IMR-90 (cell line): ENCODE measurements at regions of chr7 and their contacts with region 1.

Region 1: DNA sequence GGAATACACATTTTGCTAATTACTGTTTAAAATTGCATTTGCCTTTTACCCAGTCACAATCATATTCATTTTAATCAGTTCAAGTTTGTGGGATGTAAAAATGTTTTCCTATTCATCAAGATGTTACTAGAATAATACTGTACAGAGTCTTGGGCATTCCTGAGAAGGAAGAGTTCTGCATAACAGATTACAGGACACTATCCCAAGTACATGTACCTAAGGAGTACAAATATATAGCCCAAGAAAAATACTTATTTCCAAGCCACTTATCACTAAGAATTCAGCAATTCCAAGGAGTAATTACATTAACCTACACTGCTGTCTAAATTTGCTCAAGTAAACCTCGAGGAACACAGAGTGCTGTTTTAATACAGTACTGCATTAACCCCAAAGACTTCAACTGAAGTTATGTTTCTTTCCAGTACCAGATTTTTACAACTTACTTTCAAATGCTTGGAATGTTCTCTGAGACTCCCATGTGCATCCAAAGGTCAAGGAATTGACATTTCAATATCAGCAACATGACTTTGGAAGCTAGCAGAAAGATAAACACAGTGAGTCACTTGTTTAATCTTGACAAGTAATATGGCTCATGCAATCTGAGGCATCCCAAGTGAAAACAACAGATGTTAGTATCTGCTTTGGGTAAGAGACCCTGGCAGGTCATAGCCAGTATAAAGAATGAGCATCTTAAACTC is 125.4 kb upstream of the BET1 start:
- DNase-seq: peak; percentile 98
- ATAC-seq: peak; percentile 92
- H3K4me3 ChIP-seq: no peak overlapping the region
- H3K27ac ChIP-seq: peak overlapping the region; percentile 68; the same call in 1 of the 2 replicates
- H3K4me1 ChIP-seq: peaks cover 14% of the 10 kb centered on the region
- H3K27me3 ChIP-seq: no peaks in the 10 kb centered on the region
- CTCF ChIP-seq: no peak
- POLR2A ChIP-seq: no peak
- RAD21 ChIP-seq: no peak; the same call in 1 of the 2 replicates

Region 2: DNA sequence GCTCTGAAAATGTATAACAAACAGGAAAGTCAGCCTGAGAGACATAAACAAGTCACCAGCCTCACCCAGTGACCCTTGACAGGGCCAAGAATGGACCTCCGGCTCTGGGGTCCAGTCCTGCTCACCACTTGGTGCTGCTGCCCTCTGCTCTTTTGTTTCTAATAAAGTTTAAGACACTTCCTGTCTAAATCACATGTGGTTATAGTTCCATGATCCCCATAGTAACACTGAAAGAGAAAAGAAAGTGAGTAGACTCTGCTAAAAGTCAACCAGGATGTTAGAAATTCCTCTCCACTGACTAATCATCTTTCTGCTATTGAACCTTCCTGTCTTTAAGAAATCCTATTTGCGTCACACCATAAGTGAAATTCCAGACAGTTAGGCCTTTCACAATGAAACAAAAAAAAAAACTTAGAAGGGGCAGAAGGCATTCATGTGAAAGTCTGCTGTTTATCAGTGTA is 53.7 kb after region 1 on chr7:
- CTCF ChIA-PET with region 1: interaction called, 3 read pairs
- POLR2A ChIA-PET with region 1: no interaction called
- dilution Hi-C with region 1: no loop called
- in situ Hi-C with region 1: no loop called
- intact Hi-C with region 1: loop called (anchors 5 kb)
- DNase-seq: peak; percentile 100
- ATAC-seq: peak; percentile 78
- H3K4me3 ChIP-seq: peak overlapping the region; percentile 31; the same call in 1 of the 2 replicates
- H3K27ac ChIP-seq: peak overlapping the region; percentile 97
- H3K4me1 ChIP-seq: peaks cover 8% of the 10 kb centered on the region; the same call in 1 of the 2 replicates
- H3K27me3 ChIP-seq: no peaks in the 10 kb centered on the region
- CTCF ChIP-seq: 0 out of 2 replicates have a peak, but pooled peaks have one; percentile 5
- POLR2A ChIP-seq: peak; percentile 54; the same call in 1 of the 2 replicates
- RAD21 ChIP-seq: no peak

Region 3: DNA sequence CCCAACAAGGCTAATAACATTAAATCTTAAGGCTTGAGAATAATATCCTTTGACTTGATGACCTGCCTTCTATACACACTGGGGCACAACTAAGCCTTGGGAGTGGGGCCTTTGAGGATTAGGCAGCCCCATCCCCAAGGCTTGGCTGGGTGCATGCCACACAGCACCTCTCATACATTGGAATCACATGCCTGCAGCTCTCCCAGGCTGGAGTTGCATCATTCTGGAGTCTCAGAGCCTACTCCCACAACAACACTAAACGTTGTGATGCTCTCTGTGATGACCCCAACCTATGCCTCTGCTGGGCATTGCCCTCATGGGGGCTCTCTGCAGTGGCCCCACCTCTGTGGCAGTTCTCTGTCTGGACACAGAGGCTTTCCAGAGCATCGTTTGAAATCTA is 558.2 kb after region 1 on chr7:
- CTCF ChIA-PET with region 1: no interaction called
- POLR2A ChIA-PET with region 1: no interaction called
- dilution Hi-C with region 1: no loop called
- in situ Hi-C with region 1: no loop called
- intact Hi-C with region 1: no loop called
- DNase-seq: peak; percentile 39
- ATAC-seq: peak; percentile 73
- H3K4me3 ChIP-seq: no peak overlapping the region
- H3K27ac ChIP-seq: no peak overlapping the region
- H3K4me1 ChIP-seq: peaks cover 2% of the 10 kb centered on the region; the same call in 1 of the 2 replicates
- H3K27me3 ChIP-seq: no peaks in the 10 kb centered on the region; the same call in 1 of the 2 replicates
- CTCF ChIP-seq: no peak
- POLR2A ChIP-seq: no peak
- RAD21 ChIP-seq: no peak